IMR-90 (cell line): ENCODE measurements at regions of chr13 and their contacts with region 1.

Region 1: GRCh38 chr13:31424117-31424729 is 224.4 kb downstream of the B3GLCT start:
- DNase-seq: peak; percentile 73
- ATAC-seq: peak; percentile 100
- H3K4me3 ChIP-seq: no peak overlapping the region
- H3K27ac ChIP-seq: no peak overlapping the region
- H3K4me1 ChIP-seq: no peaks in the 10 kb centered on the region
- H3K27me3 ChIP-seq: peaks cover 14% of the 10 kb centered on the region
- CTCF ChIP-seq: peak; percentile 91
- POLR2A ChIP-seq: no peak
- RAD21 ChIP-seq: peak; percentile 91

Region 2: DNA sequence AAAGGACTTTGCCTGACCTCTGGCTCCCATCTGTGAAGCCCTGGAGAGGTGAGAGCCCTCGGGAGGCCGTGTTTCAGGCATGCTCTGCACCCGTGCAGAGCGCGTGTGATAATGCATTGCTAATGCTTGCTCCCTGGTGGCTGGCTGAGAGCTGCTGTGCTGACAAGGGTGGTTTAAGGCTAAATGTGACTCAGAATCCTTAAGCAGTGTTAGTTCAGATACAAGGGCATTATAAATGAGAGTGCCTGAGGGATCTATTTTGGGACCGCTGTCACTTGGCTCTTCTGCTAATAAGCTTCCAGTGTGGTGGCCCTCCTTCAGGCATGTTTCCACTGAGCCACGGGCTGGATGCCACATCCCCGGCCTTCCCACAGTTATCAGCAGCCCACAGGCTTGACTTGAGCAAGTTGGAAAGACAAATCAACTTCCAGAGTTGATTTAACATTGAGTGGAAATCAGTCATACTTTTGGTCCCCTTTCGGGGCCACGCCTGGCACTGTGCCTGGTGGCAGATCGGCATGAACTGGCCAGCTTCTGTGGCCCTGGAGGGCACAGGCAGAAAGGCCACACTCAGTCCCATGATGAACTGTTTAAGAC is 671.9 kb before region 1 on chr13:
- CTCF ChIA-PET with region 1: no interaction called
- POLR2A ChIA-PET with region 1: no interaction called
- dilution Hi-C with region 1: no loop called
- in situ Hi-C with region 1: no loop called
- intact Hi-C with region 1: no loop called
- DNase-seq: peak; percentile 50
- ATAC-seq: peak; percentile 81
- H3K4me3 ChIP-seq: no peak overlapping the region
- H3K27ac ChIP-seq: no peak overlapping the region
- H3K4me1 ChIP-seq: peaks cover 4% of the 10 kb centered on the region; the same call in 1 of the 2 replicates
- H3K27me3 ChIP-seq: peaks cover 19% of the 10 kb centered on the region
- CTCF ChIP-seq: no peak
- POLR2A ChIP-seq: no peak
- RAD21 ChIP-seq: no peak

Region 3: GRCh38 chr13:31174018-31174417 is 250.2 kb before region 1 on chr13:
- CTCF ChIA-PET with region 1: interaction called, 14 read pairs
- POLR2A ChIA-PET with region 1: no interaction called
- dilution Hi-C with region 1: no loop called
- in situ Hi-C with region 1: loop called (anchors 10 kb)
- intact Hi-C with region 1: loop called (anchors 1 kb)
- DNase-seq: peak; percentile 77
- ATAC-seq: peak; percentile 85
- H3K4me3 ChIP-seq: no peak overlapping the region
- H3K27ac ChIP-seq: no peak overlapping the region
- H3K4me1 ChIP-seq: peaks cover 2% of the 10 kb centered on the region
- H3K27me3 ChIP-seq: no peaks in the 10 kb centered on the region
- CTCF ChIP-seq: peak; percentile 64
- POLR2A ChIP-seq: no peak
- RAD21 ChIP-seq: peak; percentile 67

Region 4: DNA sequence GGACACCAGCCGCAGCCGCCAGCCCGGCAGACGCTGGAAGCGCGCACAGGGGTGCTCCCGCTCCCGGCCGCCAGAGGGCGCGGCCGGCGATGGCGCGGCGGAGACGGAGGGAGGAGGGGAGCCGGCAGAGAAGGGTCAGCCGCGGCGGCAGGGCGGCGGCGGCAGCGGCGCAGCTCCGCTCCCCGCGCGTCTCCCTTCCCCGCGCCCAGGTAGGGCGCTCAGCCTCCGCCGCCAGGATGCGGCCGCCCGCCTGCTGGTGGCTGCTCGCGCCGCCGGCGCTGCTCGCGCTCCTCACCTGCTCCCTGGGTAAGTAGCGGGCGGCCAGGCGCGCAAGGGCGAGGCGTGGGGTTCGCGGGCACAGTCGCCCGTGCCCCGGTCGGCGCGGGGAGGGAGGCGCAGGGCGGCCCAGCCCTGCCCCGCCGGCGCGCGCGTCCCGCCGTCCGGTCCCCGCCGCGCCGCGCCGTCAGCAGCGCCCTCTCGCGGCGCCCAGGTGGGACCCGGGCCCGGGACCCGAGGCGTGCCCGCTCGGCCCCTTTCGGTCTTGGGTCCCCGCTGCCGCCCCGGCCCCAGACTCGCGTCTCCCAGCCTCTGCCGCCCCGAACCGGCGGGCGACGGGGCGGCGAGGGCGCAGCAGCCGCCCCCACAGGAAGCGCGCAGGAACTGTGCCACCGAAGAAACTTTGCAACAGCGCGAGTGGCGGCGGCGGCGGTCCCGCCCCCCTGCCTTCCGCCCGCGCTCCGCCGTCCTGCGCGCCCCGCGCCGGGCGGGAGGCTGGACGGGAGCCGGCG is 224.2 kb before region 1 on chr13 and contains the start of gene B3GLCT:
- CTCF ChIA-PET with region 1: interaction called, 4 read pairs
- POLR2A ChIA-PET with region 1: no interaction called
- dilution Hi-C with region 1: no loop called
- in situ Hi-C with region 1: no loop called
- intact Hi-C with region 1: loop called (anchors 1 kb)
- DNase-seq: peak; percentile 68
- ATAC-seq: peak; percentile 93
- H3K4me3 ChIP-seq: peak within 1 kb of the TSS; percentile 93
- H3K27ac ChIP-seq: peak within 1 kb of the TSS; percentile 80
- H3K4me1 ChIP-seq: peaks cover 7% of the 10 kb centered on the region
- H3K27me3 ChIP-seq: no peaks in the 10 kb centered on the region
- CTCF ChIP-seq: peak; percentile 93
- POLR2A ChIP-seq: no peak
- RAD21 ChIP-seq: peak; percentile 59
- total RNA-seq, gene B3GLCT: 4.5 and 5.8 TPM in 2 replicates

Region 5: DNA sequence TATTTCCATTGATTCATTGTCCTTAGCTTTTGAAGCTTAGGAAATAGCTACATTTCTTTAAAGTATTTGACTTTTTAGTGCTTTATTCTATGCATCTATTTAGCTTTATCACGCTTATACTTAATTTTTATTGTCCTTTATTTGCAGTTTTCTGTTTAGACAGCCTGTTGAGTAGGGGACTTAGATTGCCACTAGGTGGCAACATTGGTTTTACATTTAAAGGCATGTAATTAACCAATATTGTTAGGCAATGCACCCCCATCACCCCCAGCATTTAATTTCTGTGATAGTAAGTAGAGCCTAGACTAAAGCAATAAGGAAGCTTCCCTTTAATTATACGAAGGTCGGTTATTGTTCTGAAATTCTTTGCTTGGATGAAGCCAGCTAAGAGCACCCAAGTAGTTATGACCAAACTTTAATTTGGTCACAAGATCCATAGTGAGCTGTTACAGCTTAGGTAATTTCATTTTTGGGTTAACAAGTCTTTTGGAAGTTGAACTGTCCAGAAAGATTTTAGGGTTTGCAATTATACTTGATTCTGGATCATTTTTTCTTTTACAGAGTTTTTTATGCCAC is 187.9 kb before region 1 on chr13:
- CTCF ChIA-PET with region 1: interaction called, 19 read pairs
- POLR2A ChIA-PET with region 1: no interaction called
- dilution Hi-C with region 1: no loop called
- in situ Hi-C with region 1: loop called (anchors 5 kb)
- intact Hi-C with region 1: loop called (anchors 1 kb)
- DNase-seq: peak; percentile 54
- ATAC-seq: peak; percentile 82
- H3K4me3 ChIP-seq: no peak overlapping the region
- H3K27ac ChIP-seq: no peak overlapping the region
- H3K4me1 ChIP-seq: no peaks in the 10 kb centered on the region
- H3K27me3 ChIP-seq: no peaks in the 10 kb centered on the region
- CTCF ChIP-seq: peak; percentile 77
- POLR2A ChIP-seq: no peak
- RAD21 ChIP-seq: peak; percentile 71

Region 6: DNA sequence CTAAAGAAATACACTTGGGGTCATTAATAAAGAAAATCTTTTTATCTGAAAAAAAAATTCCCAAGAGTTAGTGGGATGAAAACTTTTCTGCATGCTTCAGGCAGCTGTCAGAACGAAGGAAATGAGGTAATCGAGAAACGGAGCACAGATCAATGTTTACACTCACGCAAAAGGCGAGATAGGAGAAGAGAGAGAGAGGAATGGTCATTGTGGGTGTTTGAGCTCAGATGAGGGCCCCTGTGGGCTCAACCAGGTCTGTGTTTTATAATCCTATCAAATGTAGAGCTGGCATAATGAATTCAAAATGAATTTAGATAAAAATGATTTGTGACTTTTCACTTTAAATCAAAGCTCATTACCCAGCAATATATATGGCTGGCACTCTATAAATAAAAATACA is 308.8 kb after region 1 on chr13:
- CTCF ChIA-PET with region 1: no interaction called
- POLR2A ChIA-PET with region 1: no interaction called
- dilution Hi-C with region 1: no loop called
- in situ Hi-C with region 1: loop called (anchors 10 kb)
- intact Hi-C with region 1: no loop called
- DNase-seq: peak; percentile 40
- ATAC-seq: peak; percentile 49
- H3K4me3 ChIP-seq: 0 out of 2 replicates have a peak overlapping the region, but pooled peaks have one; percentile 10
- H3K27ac ChIP-seq: no peak overlapping the region
- H3K4me1 ChIP-seq: no peaks in the 10 kb centered on the region
- H3K27me3 ChIP-seq: peaks cover 5% of the 10 kb centered on the region; the same call in 1 of the 2 replicates
- CTCF ChIP-seq: no peak
- POLR2A ChIP-seq: no peak
- RAD21 ChIP-seq: no peak